H1 (cell line): ENCODE measurements at regions of chr3 and their contacts with region 1.

Region 1: GRCh38 chr3:58608648-58609047 is 31.5 kb upstream of the FAM107A start:
- DNase-seq: no peak
- H3K4me3 ChIP-seq: no peak overlapping the region
- H3K27ac ChIP-seq: no peak overlapping the region
- H3K4me1 ChIP-seq: no peaks in the 10 kb centered on the region
- H3K27me3 ChIP-seq: no peaks in the 10 kb centered on the region
- CTCF ChIP-seq: no peak
- EP300 ChIP-seq: no peak
- POLR2A ChIP-seq: no peak
- RAD21 ChIP-seq: no peak

Region 2: DNA sequence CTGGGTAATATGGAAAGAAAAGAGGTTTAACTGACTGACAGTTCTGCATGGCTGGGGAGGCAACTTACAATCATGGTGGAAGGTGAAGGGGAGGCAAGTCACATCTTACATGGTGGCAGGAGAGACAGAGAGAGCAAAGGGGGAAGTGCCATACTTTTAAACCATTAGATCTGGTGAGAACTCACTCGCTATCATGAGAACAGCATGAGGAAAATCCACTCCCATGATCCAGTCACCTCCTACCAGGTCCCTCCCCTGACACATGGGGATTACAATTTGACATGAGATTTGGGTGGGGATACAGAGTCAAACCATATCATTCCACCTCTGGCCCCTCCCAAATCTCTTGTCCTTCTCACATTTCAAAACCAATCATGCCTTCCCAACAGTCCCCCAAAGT is 55.6 kb before region 1 on chr3:
- CTCF ChIA-PET with region 1: no interaction called
- POLR2A ChIA-PET with region 1: no interaction called
- DNase-seq: no peak
- H3K4me3 ChIP-seq: no peak overlapping the region
- H3K27ac ChIP-seq: no peak overlapping the region
- H3K4me1 ChIP-seq: peaks cover 0 to 5% (median 2%) of the 10 kb centered on the region in 4 experiments; a peak in 4 of 7 replicates
- H3K27me3 ChIP-seq: no peaks in the 10 kb centered on the region
- CTCF ChIP-seq: no peak
- EP300 ChIP-seq: no peak
- POLR2A ChIP-seq: no peak
- RAD21 ChIP-seq: no peak

Region 3: DNA sequence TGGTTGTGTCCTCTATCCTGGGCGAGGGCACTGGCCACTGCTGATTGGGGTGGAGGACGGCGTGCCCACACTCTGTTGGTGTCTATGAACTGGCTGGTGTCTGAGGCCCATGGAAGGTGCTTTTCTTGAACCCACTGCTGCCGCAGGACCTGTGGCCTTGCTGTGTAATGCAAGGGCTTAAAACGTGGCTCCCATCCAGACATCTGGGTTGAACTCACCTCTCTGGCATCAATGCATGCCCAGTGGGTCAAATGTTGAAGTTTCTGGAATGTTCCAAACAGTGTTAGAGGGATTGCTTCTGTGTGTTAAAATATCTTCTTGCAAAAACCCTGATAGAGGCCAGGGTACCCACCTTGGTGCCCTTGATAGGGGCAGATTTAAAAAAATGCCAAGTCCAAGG is 15.3 kb after region 1 on chr3:
- CTCF ChIA-PET with region 1: interaction called, 12 read pairs
- POLR2A ChIA-PET with region 1: no interaction called
- DNase-seq: no peak
- H3K4me3 ChIP-seq: no peak overlapping the region
- H3K27ac ChIP-seq: no peak overlapping the region
- H3K4me1 ChIP-seq: no peaks in the 10 kb centered on the region
- H3K27me3 ChIP-seq: no peaks in the 10 kb centered on the region
- CTCF ChIP-seq: no peak
- EP300 ChIP-seq: no peak
- POLR2A ChIP-seq: no peak
- RAD21 ChIP-seq: no peak

Region 4: GRCh38 chr3:58630076-58630709 is 21.5 kb after region 1 on chr3:
- CTCF ChIA-PET with region 1: interaction called, 15 read pairs
- POLR2A ChIA-PET with region 1: no interaction called
- DNase-seq: peak; percentile 23 to 96
- H3K4me3 ChIP-seq: no peak overlapping the region
- H3K27ac ChIP-seq: no peak overlapping the region
- H3K4me1 ChIP-seq: peaks cover 0 to 4% (median 0%) of the 10 kb centered on the region in 4 experiments; a peak in 2 of 7 replicates
- H3K27me3 ChIP-seq: peaks cover under 1 to 25% (median 5%) of the 10 kb centered on the region in 4 experiments; a peak in 6 of 7 replicates
- CTCF ChIP-seq: peak; percentile 70 to 92 (median 89)
- EP300 ChIP-seq: no peak
- POLR2A ChIP-seq: no peak
- RAD21 ChIP-seq: peak; percentile 92 to 93